B cell (primary cell): ENCODE measurements at regions of chr12 and their contacts with region 1.

Region 1: GRCh38 chr12:76763743-76764675 is at the start of gene ZDHHC17:
- DNase-seq: peak; percentile 95
- ATAC-seq: peak; percentile 86
- H3K4me3 ChIP-seq: peak within 1 kb of the TSS; percentile 82 to 94 (median 92)
- H3K4me3 Mint-ChIP-seq: peak within 1 kb of the TSS; percentile 99
- H3K27ac ChIP-seq: peak within 1 kb of the TSS; percentile 94 to 96
- H3K27ac Mint-ChIP-seq: peak within 1 kb of the TSS; percentile 99
- H3K4me1 ChIP-seq: peaks cover 17 to 29% of the 10 kb centered on the region in 2 donors
- H3K4me1 Mint-ChIP-seq: peaks cover 47% of the 10 kb centered on the region
- H3K27me3 ChIP-seq: no peaks in the 10 kb centered on the region
- H3K27me3 Mint-ChIP-seq: no peaks in the 10 kb centered on the region
- CTCF ChIP-seq: no peak
- total RNA-seq, gene ZDHHC17: 75.0 and 86.7 TPM in 2 replicates

Region 2: DNA sequence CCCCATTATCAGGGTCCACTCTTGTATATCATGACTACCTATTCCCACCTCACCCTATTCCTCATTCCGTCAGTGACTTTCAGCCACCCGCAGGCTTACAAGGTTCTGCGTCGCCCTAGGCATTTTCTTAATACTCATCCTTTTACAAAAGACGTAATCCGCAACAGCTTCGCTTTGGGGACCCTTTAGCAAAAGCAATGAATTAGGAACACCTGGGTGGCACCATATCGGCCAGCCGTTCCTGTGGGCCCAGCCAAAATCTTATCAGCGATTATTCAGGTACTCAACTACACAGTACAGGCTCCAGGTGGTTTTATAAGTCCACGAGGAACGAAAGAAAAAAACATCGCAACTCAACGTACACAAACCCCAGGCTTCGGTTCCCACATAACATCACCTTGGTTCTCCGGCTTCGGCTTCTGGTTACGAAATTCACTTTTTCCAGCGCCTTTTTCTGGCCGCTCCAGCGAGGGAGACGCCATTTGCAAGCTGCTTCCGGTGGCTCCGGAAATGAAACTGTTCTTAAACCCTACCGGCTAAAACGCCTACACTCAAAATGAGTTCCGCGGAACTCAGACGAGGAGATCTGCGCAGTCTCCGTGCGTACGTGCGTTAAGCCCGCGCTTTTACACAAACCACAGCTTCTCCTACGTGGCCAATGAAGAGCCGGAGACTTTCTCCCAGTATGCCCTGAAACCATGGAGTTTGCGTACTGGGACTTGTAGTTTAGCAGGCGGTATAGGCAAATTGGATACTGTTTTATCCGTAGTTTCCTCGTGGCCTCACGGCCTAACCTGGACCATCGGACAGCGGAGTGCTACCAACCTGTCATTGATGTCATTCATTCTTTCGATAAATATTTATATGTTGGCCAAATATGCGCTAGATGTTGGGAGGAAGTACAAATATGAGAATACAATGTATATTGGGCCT is 1252.6 kb before region 1 on chr12 and contains the start of gene KRR1:
- CTCF ChIA-PET with region 1: no interaction called
- POLR2A ChIA-PET with region 1: no interaction called
- intact Hi-C with region 1: loop called (anchors 1 kb)
- DNase-seq: peak; percentile 95
- ATAC-seq: peak; percentile 97
- H3K4me3 ChIP-seq: peak within 1 kb of the TSS; percentile 61 to 100 (median 93)
- H3K4me3 Mint-ChIP-seq: peak within 1 kb of the TSS; percentile 93
- H3K27ac ChIP-seq: peak within 1 kb of the TSS; percentile 72 to 83
- H3K27ac Mint-ChIP-seq: peak within 1 kb of the TSS; percentile 95
- H3K4me1 ChIP-seq: peaks cover 11 to 18% of the 10 kb centered on the region in 2 donors
- H3K4me1 Mint-ChIP-seq: peaks cover 28% of the 10 kb centered on the region
- H3K27me3 ChIP-seq: no peaks in the 10 kb centered on the region
- H3K27me3 Mint-ChIP-seq: no peaks in the 10 kb centered on the region
- CTCF ChIP-seq: no peak
- total RNA-seq, gene KRR1: 80.2 and 87.7 TPM in 2 replicates

Region 3: GRCh38 chr12:76559400-76560085 is 204.5 kb before region 1 on chr12 and contains the start of gene OSBPL8:
- CTCF ChIA-PET with region 1: interaction called, 3 read pairs
- POLR2A ChIA-PET with region 1: no interaction called
- intact Hi-C with region 1: loop called (anchors 2 kb)
- DNase-seq: peak; percentile 95
- ATAC-seq: peak; percentile 79
- H3K4me3 ChIP-seq: peak within 1 kb of the TSS; percentile 76 to 99 (median 93)
- H3K4me3 Mint-ChIP-seq: peak within 1 kb of the TSS; percentile 98
- H3K27ac ChIP-seq: peak within 1 kb of the TSS; percentile 93 to 96
- H3K27ac Mint-ChIP-seq: peak within 1 kb of the TSS; percentile 98
- H3K4me1 ChIP-seq: peaks cover 29 to 46% of the 10 kb centered on the region in 2 donors
- H3K4me1 Mint-ChIP-seq: peaks cover 44% of the 10 kb centered on the region
- H3K27me3 ChIP-seq: no peaks in the 10 kb centered on the region
- H3K27me3 Mint-ChIP-seq: no peaks in the 10 kb centered on the region
- CTCF ChIP-seq: no peak
- total RNA-seq, gene OSBPL8: 112 and 116 TPM in 2 replicates

Region 4: GRCh38 chr12:76790564-76791552 is 26.8 kb after region 1 on chr12:
- CTCF ChIA-PET with region 1: interaction called, 13 read pairs
- POLR2A ChIA-PET with region 1: no interaction called
- intact Hi-C with region 1: loop called (anchors 2 kb)
- DNase-seq: peak; percentile 56
- ATAC-seq: peak; percentile 33
- H3K4me3 ChIP-seq: no peak overlapping the region
- H3K4me3 Mint-ChIP-seq: no peak overlapping the region
- H3K27ac ChIP-seq: peak overlapping the region in 1 of 2 donors; percentile 52
- H3K27ac Mint-ChIP-seq: peak overlapping the region; percentile 12
- H3K4me1 ChIP-seq: peaks cover 7 to 12% of the 10 kb centered on the region in 2 donors
- H3K4me1 Mint-ChIP-seq: peaks cover 27% of the 10 kb centered on the region
- H3K27me3 ChIP-seq: no peaks in the 10 kb centered on the region
- H3K27me3 Mint-ChIP-seq: no peaks in the 10 kb centered on the region
- CTCF ChIP-seq: peak; percentile 92